ENCODE measurements at regions of chr17 and their contacts with region 1.

Region 1: GRCh38 chr17:57987580-57988421 is at the start of gene VEZF1:
- DNase-seq: peak; percentile 87 to 94
- ATAC-seq: peak; percentile 86
- H3K4me3 ChIP-seq: peak within 1 kb of the TSS; percentile 76 to 90
- H3K27ac ChIP-seq: peak within 1 kb of the TSS; percentile 77 to 94
- H3K4me1 ChIP-seq: peaks cover 4 to 9% of the 10 kb centered on the region in 2 donors
- H3K27me3 ChIP-seq: peaks cover 0 to 2% of the 10 kb centered on the region in 2 donors
- total RNA-seq, gene VEZF1: 57.3 to 59.8 TPM

Region 2: GRCh38 chr17:57794841-57795240 is 193.0 kb before region 1 on chr17:
- intact Hi-C with region 1: no loop called
- DNase-seq: no peak
- ATAC-seq: no peak
- H3K4me3 ChIP-seq: no peak overlapping the region
- H3K27ac ChIP-seq: no peak overlapping the region
- H3K4me1 ChIP-seq: no peaks in the 10 kb centered on the region
- H3K27me3 ChIP-seq: no peaks in the 10 kb centered on the region

Region 3: DNA sequence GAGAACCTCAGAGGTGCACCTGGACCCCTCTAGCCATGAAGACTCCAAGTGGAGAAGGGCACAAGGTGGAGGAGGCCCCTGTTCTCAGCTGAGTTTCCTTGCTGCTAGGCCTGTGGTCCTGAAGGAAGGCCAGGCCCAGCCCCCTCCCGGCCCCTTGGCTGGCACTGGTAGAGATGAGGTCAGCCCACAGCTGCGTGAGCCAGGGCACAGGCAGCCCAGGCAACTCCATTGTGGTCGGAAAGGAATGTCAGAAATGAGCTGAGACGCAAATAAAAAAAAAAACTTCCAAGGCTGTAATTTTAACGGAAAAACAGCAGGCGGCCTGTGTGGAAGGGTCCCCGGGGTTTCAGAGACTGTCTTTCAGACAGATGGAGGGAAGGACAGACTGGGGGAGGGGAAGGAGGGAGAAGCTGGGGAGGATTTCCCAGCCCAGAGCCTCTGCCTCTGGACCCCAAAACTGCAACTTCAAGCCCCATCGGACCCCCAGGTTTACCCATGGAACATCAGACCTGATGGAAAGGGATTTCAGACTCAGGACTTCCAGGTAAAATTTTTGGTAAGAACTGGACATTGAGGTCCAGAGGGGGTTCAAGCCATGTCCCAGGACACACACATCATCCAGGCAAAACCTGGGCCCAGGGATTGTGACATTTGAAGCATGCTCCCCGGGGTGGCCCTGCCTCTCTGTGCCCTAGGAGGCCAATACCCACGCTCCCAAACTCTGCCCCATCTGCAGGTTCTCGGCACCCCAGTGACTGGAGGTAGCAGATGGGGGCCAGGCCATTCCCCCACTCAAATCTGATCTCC is 112.3 kb before region 1 on chr17:
- intact Hi-C with region 1: loop called in 1 of 2 experiments (anchors 2 kb)
- DNase-seq: peak; percentile 94 to 95
- ATAC-seq: peak; percentile 96
- H3K4me3 ChIP-seq: no peak overlapping the region
- H3K27ac ChIP-seq: peak overlapping the region; percentile 71 to 92
- H3K4me1 ChIP-seq: no peaks in the 10 kb centered on the region
- H3K27me3 ChIP-seq: no peaks in the 10 kb centered on the region

Region 4: DNA sequence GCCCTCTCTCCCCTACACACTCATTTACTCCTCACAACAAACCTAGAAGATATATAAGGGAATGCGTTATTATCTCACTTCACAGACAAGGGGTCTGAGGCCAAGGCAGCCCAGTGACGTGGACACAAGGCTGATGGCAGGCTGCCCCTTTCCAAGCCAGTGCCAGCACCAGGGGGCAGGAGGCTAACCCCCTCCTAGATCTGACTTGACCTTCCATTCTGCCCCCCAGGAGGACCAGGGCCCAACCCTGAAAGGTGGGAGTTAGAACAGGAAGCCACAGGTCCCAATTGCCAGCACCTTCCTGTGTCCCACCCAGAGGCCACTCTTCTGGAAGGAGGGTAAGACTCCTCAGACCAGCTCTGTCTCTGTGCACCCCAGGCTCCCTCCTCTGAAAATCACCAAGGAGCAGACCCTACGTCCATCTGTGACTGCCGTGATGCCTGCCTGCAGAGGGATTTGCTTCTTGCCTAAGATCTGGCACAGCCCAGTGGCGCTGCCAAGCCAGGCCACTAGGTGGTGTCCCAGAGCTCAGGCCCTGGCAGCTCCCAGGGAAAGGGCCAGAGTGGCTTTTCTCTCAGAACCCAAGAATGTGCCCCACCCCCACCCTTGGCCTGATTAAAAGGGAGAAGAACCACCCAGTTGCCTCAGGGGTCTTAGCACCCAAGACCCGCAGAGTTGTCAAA is 95.5 kb before region 1 on chr17:
- intact Hi-C with region 1: no loop called
- DNase-seq: peak; percentile 91 to 94
- ATAC-seq: peak; percentile 84
- H3K4me3 ChIP-seq: no peak overlapping the region
- H3K27ac ChIP-seq: peak overlapping the region; percentile 83 to 99
- H3K4me1 ChIP-seq: peaks cover 4 to 9% of the 10 kb centered on the region in 2 donors
- H3K27me3 ChIP-seq: no peaks in the 10 kb centered on the region

Region 5: GRCh38 chr17:57927048-57927723 is 60.6 kb before region 1 on chr17:
- intact Hi-C with region 1: no loop called
- DNase-seq: peak in 1 of 2 donors; percentile 70
- ATAC-seq: peak; percentile 56
- H3K4me3 ChIP-seq: no peak overlapping the region
- H3K27ac ChIP-seq: no peak overlapping the region
- H3K4me1 ChIP-seq: peaks cover 0 to 1% of the 10 kb centered on the region in 2 donors
- H3K27me3 ChIP-seq: no peaks in the 10 kb centered on the region

Region 6: DNA sequence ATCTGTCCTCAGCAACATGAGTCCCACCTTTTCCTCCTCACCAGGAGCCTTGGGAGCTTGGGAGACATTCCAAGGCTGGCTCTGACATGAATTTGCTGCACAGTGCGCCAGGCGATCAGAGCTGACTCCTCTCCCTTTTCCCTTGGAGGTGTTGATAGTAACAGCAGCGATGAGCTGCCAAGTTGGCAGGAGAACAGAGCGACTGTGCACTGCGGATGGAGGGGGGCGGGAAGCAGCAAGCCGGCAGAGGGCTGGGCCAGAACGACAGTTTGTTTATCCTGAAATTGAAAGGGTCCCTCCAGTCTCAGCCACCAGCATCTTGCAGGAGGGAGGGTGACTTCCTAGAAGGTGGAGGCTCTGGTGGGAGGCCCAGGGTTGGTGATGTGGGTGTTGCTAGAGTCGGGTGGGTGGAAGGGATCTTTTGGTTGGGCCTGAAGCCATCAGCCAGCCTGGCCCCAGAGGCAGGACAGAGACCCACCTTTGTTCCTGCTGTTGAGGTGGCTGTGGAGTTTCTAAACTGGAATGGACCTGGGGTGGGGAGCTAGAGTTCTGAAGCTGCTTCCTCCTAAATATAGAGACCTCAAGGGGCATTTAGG is 72.9 kb after region 1 on chr17:
- intact Hi-C with region 1: no loop called
- DNase-seq: peak in 1 of 2 donors; percentile 46
- ATAC-seq: no peak
- H3K4me3 ChIP-seq: no peak overlapping the region
- H3K27ac ChIP-seq: no peak overlapping the region
- H3K4me1 ChIP-seq: no peaks in the 10 kb centered on the region
- H3K27me3 ChIP-seq: peaks cover 0 to 1% of the 10 kb centered on the region in 2 donors